MCF 10A (cell line): ENCODE measurements at regions of chr9 and their contacts with region 1.

Region 1: GRCh38 chr9:4366591-4367330 is 66.9 kb upstream of the GLIS3 start:
- DNase-seq: peak; percentile 52
- H3K4me3 Mint-ChIP-seq: no peak overlapping the region
- H3K27ac Mint-ChIP-seq: no peak overlapping the region
- H3K4me1 Mint-ChIP-seq: no peaks in the 10 kb centered on the region
- H3K27me3 Mint-ChIP-seq: peaks cover 3% of the 10 kb centered on the region
- CTCF ChIP-seq: peak; percentile 80

Region 2: DNA sequence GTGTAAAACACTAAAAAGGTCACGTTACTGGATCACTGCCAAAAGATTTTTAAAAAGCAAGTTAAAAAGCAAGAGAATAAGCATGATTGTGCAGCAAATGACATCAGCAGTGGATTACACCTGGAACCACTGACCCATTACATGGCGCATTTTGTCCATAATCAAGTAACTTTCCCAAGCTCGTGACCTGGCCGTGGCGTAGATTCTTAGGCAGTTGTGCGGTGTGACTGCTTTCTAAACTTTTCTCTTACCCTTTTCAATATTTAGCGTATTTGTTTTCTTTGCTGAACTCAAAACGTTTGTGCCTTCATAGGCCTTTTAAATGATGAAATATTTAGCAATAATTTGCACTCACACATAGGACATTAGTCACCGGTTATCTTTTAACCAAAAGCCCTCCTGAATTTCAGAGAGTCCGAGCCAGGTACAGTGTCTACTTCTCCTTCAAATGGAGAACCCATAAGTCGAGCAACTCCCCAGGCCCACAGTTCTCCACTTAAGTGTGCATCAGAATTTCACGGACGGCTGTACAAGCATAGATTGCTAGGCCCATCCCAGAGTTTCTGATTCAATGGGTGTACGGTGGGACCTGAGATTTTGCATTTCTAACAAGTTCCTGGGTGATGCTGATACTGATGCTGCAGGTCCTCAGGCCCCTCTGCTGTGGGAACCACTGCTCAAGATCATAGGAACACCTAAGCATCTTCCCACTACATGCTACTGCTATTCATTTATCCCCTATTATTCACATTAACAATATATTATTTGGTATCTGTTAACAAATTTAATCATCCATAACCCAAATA is 211.3 kb before region 1 on chr9:
- CTCF ChIA-PET with region 1: no interaction called
- POLR2A ChIA-PET with region 1: no interaction called
- intact Hi-C with region 1: no loop called
- DNase-seq: no peak
- H3K4me3 Mint-ChIP-seq: no peak overlapping the region
- H3K27ac Mint-ChIP-seq: no peak overlapping the region
- H3K4me1 Mint-ChIP-seq: no peaks in the 10 kb centered on the region
- H3K27me3 Mint-ChIP-seq: no peaks in the 10 kb centered on the region
- CTCF ChIP-seq: no peak

Region 3: GRCh38 chr9:4228606-4229005 is 138.2 kb before region 1 on chr9:
- CTCF ChIA-PET with region 1: interaction called, 4 read pairs
- POLR2A ChIA-PET with region 1: no interaction called
- intact Hi-C with region 1: loop called (anchors 5 kb)
- DNase-seq: peak; percentile 48
- H3K4me3 Mint-ChIP-seq: no peak overlapping the region
- H3K27ac Mint-ChIP-seq: peak overlapping the region; percentile 76
- H3K4me1 Mint-ChIP-seq: no peaks in the 10 kb centered on the region
- H3K27me3 Mint-ChIP-seq: no peaks in the 10 kb centered on the region
- CTCF ChIP-seq: peak; percentile 62

Region 4: DNA sequence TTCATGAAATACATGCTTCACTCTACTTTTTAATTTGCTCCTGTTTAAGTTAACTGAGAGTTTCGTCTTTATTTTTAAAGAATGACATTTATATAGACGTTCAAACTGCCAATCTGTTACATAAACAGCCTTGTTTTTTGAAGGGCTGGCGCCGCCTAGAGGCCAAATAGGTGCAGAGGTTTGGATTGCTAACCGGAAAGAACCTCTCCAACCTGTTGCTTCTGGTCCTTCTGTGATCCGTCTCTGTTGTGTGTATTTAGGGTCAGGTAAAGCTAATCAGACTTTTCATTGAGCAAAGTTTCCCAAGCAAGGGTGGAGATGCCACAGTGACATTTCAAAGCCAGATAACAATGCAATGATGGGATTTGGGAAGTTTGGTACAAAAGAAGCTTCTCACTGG is 27.4 kb before region 1 on chr9:
- CTCF ChIA-PET with region 1: interaction called, 65 read pairs
- POLR2A ChIA-PET with region 1: interaction called, 3 read pairs
- intact Hi-C with region 1: no loop called
- DNase-seq: peak; percentile 90
- H3K4me3 Mint-ChIP-seq: no peak overlapping the region
- H3K27ac Mint-ChIP-seq: no peak overlapping the region
- H3K4me1 Mint-ChIP-seq: peaks cover 10% of the 10 kb centered on the region
- H3K27me3 Mint-ChIP-seq: no peaks in the 10 kb centered on the region
- CTCF ChIP-seq: peak; percentile 92

Region 5: DNA sequence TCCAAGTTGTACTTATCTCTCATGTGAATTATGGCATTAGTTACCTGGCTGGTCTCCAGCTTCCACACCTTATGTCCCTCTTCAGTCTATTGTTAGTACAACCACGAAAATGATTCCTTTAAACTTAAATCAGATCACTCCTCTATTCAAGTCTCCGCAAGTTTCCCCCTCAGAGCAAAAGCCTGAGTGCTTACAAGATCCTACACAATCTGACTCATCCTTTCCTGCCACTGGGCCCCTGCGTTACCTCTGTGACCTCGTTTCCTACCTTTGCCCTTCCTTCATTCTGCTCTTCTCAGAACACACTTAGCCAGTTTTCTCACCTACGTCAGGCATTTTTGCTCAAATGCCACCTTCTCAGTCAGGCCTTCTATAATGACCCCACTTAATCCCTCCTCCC is 21.8 kb before region 1 on chr9:
- CTCF ChIA-PET with region 1: interaction called, 65 read pairs
- POLR2A ChIA-PET with region 1: no interaction called
- intact Hi-C with region 1: no loop called
- DNase-seq: peak; percentile 78
- H3K4me3 Mint-ChIP-seq: no peak overlapping the region
- H3K27ac Mint-ChIP-seq: peak overlapping the region; percentile 3
- H3K4me1 Mint-ChIP-seq: peaks cover 11% of the 10 kb centered on the region
- H3K27me3 Mint-ChIP-seq: no peaks in the 10 kb centered on the region
- CTCF ChIP-seq: no peak

Region 6: GRCh38 chr9:4353236-4353635 is 13.5 kb before region 1 on chr9:
- CTCF ChIA-PET with region 1: interaction called, 12 read pairs
- POLR2A ChIA-PET with region 1: no interaction called
- intact Hi-C with region 1: no loop called
- DNase-seq: peak; percentile 27
- H3K4me3 Mint-ChIP-seq: no peak overlapping the region
- H3K27ac Mint-ChIP-seq: no peak overlapping the region
- H3K4me1 Mint-ChIP-seq: no peaks in the 10 kb centered on the region
- H3K27me3 Mint-ChIP-seq: no peaks in the 10 kb centered on the region
- CTCF ChIP-seq: no peak

Region 7: GRCh38 chr9:4461437-4461836 is 94.7 kb after region 1 on chr9:
- CTCF ChIA-PET with region 1: no interaction called
- POLR2A ChIA-PET with region 1: no interaction called
- intact Hi-C with region 1: no loop called
- DNase-seq: no peak
- H3K4me3 Mint-ChIP-seq: no peak overlapping the region
- H3K27ac Mint-ChIP-seq: no peak overlapping the region
- H3K4me1 Mint-ChIP-seq: no peaks in the 10 kb centered on the region
- H3K27me3 Mint-ChIP-seq: no peaks in the 10 kb centered on the region
- CTCF ChIP-seq: no peak

Region 8: GRCh38 chr9:4515958-4516375 is 149.2 kb after region 1 on chr9:
- CTCF ChIA-PET with region 1: no interaction called
- POLR2A ChIA-PET with region 1: no interaction called
- intact Hi-C with region 1: no loop called
- DNase-seq: no peak
- H3K4me3 Mint-ChIP-seq: no peak overlapping the region
- H3K27ac Mint-ChIP-seq: no peak overlapping the region
- H3K4me1 Mint-ChIP-seq: no peaks in the 10 kb centered on the region
- H3K27me3 Mint-ChIP-seq: no peaks in the 10 kb centered on the region
- CTCF ChIP-seq: no peak